ENCODE measurements at regions of chr2 and their contacts with region 1.

Region 1: GRCh38 chr2:85538486-85539360 is at the start of gene MAT2A:
- DNase-seq: peak; percentile 89
- ATAC-seq: peak; percentile 81
- H3K4me3 ChIP-seq: peak within 1 kb of the TSS; percentile 84 to 94
- H3K27ac ChIP-seq: peak within 1 kb of the TSS; percentile 99
- H3K4me1 ChIP-seq: peaks cover 14 to 45% of the 10 kb centered on the region in 2 experiments; a peak in 3 of 4 replicates
- H3K27me3 ChIP-seq: no peaks in the 10 kb centered on the region
- CTCF ChIP-seq: peak in 2 of 3 experiments; percentile 58 to 74; a peak in 4 of 6 replicates
- POLR2A ChIP-seq: peak; percentile 99
- RAD21 ChIP-seq: no peak
- total RNA-seq, gene MAT2A: 444 TPM

Region 2: DNA sequence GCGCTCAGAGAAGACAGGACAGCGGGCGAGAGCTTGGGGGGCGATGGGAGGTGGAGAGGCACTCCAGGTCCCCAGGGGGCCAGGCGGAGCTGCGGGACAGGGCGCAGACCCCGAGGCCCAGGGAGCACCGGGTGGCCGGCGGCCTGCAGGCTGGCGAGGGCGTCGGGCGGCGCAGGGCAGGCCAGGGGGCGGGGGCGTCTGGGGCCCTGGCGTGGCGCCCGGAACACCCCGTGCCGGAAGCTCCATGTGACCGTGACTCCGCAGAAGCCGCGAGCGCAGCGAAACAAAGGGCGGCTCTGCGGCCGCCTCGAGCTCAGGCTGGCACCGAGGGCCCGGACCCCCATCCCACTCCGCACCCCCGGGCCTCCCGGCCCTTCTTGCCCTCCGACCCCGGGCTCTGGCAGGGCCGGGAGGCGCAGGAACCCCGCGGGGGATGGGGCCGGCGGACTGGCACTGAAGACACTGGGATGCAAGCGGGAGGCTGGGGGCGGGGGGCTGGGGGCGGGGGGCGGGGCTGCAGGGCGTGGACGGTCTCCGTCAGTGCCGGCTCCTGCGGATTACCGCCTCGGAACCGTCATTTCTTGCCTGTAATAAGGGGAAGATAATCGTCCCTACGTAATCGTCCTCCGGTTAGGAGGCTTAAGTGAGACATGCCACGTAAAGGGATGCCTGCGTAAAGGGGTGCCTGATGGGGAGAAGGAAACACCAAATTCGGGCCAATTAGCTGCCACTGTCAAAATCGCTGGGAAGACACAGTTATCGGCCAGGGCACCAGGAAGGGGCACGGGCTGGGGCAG is 101.0 kb before region 1 on chr2:
- CTCF ChIA-PET with region 1: interaction called, 3 read pairs
- POLR2A ChIA-PET with region 1: interaction called, 45 read pairs
- RAD21 ChIA-PET with region 1: no interaction called
- intact Hi-C with region 1: no loop called
- DNase-seq: no peak
- ATAC-seq: no peak
- H3K4me3 ChIP-seq: no peak overlapping the region
- H3K27ac ChIP-seq: no peak overlapping the region
- H3K4me1 ChIP-seq: peaks cover 22 to 30% of the 10 kb centered on the region in 2 experiments
- H3K27me3 ChIP-seq: no peaks in the 10 kb centered on the region
- CTCF ChIP-seq: no peak
- POLR2A ChIP-seq: no peak
- RAD21 ChIP-seq: no peak

Region 3: GRCh38 chr2:85457877-85458316 is 80.8 kb before region 1 on chr2:
- CTCF ChIA-PET with region 1: interaction called, 3 read pairs
- POLR2A ChIA-PET with region 1: interaction called, 13 read pairs
- RAD21 ChIA-PET with region 1: no interaction called
- intact Hi-C with region 1: loop called (anchors 1 kb)
- DNase-seq: peak; percentile 95
- ATAC-seq: peak; percentile 81
- H3K4me3 ChIP-seq: peak overlapping the region in 1 of 2 experiments; percentile 20; a peak in 1 of 4 replicates
- H3K27ac ChIP-seq: peak overlapping the region; percentile 85
- H3K4me1 ChIP-seq: peaks cover 53 to 69% of the 10 kb centered on the region in 2 experiments
- H3K27me3 ChIP-seq: no peaks in the 10 kb centered on the region
- CTCF ChIP-seq: no peak
- POLR2A ChIP-seq: no peak
- RAD21 ChIP-seq: no peak; the same call in 1 of the 2 replicates

Region 4: DNA sequence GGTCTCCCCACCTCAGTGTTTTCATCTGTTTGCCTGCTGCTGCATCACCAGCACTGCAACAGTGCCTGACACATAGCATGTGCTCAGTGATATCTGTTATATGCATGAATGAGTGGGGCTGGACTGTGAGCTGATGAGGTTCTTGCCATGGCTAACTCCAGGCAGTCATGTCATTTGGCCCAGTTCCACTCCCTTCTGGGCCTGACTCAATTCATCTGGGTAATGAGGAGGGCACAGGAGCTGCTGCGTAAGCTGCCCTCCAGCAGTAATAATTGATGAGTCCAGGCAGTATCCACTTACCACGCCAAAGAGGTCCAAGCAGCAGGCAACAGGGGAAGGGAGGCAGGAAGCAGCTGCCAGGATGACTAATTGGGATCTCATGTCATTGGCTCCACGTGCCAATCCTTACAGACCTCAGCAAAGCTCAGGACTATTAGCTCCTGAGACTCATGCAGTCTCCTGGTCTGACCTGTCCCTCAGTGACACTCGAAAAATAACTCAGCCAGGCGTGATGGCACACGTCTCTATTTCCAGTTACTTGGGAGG is 33.9 kb before region 1 on chr2:
- CTCF ChIA-PET with region 1: interaction called, 4 read pairs
- POLR2A ChIA-PET with region 1: interaction called, 47 read pairs
- RAD21 ChIA-PET with region 1: interaction called, 3 to 10 read pairs
- intact Hi-C with region 1: no loop called
- DNase-seq: peak; percentile 72
- ATAC-seq: peak; percentile 79
- H3K4me3 ChIP-seq: peak overlapping the region in 1 of 2 experiments; percentile 14; a peak in 1 of 4 replicates
- H3K27ac ChIP-seq: peak overlapping the region; percentile 43
- H3K4me1 ChIP-seq: peaks cover 40 to 74% of the 10 kb centered on the region in 2 experiments
- H3K27me3 ChIP-seq: no peaks in the 10 kb centered on the region
- CTCF ChIP-seq: no peak
- POLR2A ChIP-seq: no peak
- RAD21 ChIP-seq: no peak

Region 5: GRCh38 chr2:85551698-85552678 is 13.3 kb after region 1 on chr2:
- CTCF ChIA-PET with region 1: interaction called, 6 read pairs
- POLR2A ChIA-PET with region 1: interaction called, 58 read pairs
- RAD21 ChIA-PET with region 1: interaction called, 3 to 8 read pairs
- intact Hi-C with region 1: no loop called
- DNase-seq: peak; percentile 72
- ATAC-seq: peak; percentile 81
- H3K4me3 ChIP-seq: no peak overlapping the region
- H3K27ac ChIP-seq: 0 out of 2 replicates have a peak overlapping the region, but pooled peaks have one; percentile 4
- H3K4me1 ChIP-seq: no peaks in the 10 kb centered on the region
- H3K27me3 ChIP-seq: no peaks in the 10 kb centered on the region
- CTCF ChIP-seq: peak; percentile 91 to 96 (median 95)
- POLR2A ChIP-seq: no peak
- RAD21 ChIP-seq: peak; percentile 99

Measured in HCT116 (cell line).